ENCODE measurements at regions of chr10 and their contacts with region 1.

Region 1: DNA sequence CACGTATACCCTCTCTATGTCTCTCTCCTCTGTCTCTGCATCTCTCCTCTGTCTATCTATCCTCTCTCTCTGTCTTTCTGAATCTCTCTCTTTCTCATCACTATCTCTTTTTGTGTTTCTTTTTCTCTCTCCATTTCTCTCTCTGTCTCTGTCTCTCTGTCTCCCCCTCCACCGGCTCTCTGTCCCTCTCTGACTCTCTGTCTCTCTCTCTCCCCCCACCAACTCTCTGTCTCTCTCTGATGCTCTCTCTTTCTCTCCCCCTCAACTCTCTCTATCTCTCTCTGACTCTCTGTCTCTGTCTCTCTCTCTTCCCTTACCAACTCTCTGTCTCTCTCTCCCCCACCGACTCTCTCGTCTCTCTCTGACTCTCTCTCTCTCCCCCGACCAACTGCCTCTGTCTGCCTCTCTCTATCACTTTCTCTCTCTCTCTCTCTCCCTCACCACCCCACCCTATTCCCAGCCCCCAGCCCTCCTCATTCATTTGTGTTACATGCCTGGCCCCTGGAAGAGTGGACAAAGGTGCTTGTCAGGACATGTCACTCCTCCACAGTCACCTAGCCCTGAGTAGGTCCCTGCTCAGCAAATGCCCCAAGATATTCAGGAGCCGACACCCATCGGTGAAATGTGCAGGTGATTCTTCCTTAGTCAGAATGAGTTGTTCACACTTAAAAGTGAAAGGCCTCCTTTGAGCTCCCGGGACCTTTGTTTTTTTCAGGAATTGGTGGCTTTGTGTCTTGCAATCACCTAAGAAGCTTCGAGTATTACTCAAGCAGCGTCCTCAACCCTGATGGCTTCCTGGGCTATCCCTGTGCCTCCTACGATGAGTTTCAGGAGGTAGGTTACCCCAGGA is 13.6 kb downstream of the PNLIPRP2 start:
- DNase-seq: no peak
- H3K4me3 ChIP-seq: no peak overlapping the region
- H3K27ac ChIP-seq: no peak overlapping the region
- H3K4me1 ChIP-seq: no peaks in the 10 kb centered on the region
- H3K27me3 ChIP-seq: no peaks in the 10 kb centered on the region
- CTCF ChIP-seq: no peak
- POLR2A ChIP-seq: no peak

Region 2: GRCh38 chr10:116787893-116788665 is 153.7 kb after region 1 on chr10:
- intact Hi-C with region 1: loop called in 1 of 2 experiments (anchors 5 kb)
- DNase-seq: peak; percentile 68 to 91 (median 82)
- H3K4me3 ChIP-seq: peak overlapping the region in 1 of 4 donors; percentile 30
- H3K27ac ChIP-seq: peak overlapping the region in 2 of 5 donors; percentile 48 to 70
- H3K4me1 ChIP-seq: peaks cover 0 to 10% of the 10 kb centered on the region in 2 donors
- H3K27me3 ChIP-seq: peaks cover 4% of the 10 kb centered on the region
- CTCF ChIP-seq: peak; percentile 94 to 100 (median 98)
- POLR2A ChIP-seq: no peak

Region 3: DNA sequence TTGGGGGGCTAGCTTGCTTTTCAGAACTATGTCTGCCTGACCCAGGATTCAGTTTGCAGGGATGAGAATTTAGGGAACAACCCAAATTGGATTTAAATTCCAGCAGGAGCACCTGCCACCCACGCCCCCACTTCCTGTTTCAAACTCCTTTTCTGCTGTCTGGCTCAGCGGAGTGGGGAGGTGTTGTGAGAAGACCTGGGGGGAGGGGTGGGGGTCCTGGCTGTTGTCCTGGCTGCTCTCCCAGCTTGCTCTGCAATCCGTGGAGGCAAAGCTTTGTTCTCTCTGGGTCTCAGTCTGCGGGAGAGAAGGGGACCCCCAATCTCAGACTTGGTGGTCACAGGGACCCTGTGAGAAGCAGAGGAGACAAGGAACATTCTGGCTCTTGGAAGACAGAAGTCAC is 563.7 kb after region 1 on chr10:
- intact Hi-C with region 1: no loop called
- DNase-seq: no peak
- H3K4me3 ChIP-seq: no peak overlapping the region
- H3K27ac ChIP-seq: no peak overlapping the region
- H3K4me1 ChIP-seq: no peaks in the 10 kb centered on the region
- H3K27me3 ChIP-seq: no peaks in the 10 kb centered on the region
- CTCF ChIP-seq: no peak
- POLR2A ChIP-seq: no peak

Measured in adrenal gland (tissue), 19 donors.